Stomach (tissue), 19 donors: ENCODE measurements at regions of chr22 and their contacts with region 1.

Region 1: GRCh38 chr22:47575291-47575690 is 812.8 kb downstream of the TBC1D22A start:
- DNase-seq: peak; percentile 31 to 39
- H3K4me3 ChIP-seq: no peak overlapping the region
- H3K27ac ChIP-seq: no peak overlapping the region
- H3K4me1 ChIP-seq: no peaks in the 10 kb centered on the region
- H3K27me3 ChIP-seq: peaks cover 0 to 20% (median 0%) of the 10 kb centered on the region in 3 donors
- CTCF ChIP-seq: no peak
- EP300 ChIP-seq: no peak
- POLR2A ChIP-seq: no peak

Region 2: DNA sequence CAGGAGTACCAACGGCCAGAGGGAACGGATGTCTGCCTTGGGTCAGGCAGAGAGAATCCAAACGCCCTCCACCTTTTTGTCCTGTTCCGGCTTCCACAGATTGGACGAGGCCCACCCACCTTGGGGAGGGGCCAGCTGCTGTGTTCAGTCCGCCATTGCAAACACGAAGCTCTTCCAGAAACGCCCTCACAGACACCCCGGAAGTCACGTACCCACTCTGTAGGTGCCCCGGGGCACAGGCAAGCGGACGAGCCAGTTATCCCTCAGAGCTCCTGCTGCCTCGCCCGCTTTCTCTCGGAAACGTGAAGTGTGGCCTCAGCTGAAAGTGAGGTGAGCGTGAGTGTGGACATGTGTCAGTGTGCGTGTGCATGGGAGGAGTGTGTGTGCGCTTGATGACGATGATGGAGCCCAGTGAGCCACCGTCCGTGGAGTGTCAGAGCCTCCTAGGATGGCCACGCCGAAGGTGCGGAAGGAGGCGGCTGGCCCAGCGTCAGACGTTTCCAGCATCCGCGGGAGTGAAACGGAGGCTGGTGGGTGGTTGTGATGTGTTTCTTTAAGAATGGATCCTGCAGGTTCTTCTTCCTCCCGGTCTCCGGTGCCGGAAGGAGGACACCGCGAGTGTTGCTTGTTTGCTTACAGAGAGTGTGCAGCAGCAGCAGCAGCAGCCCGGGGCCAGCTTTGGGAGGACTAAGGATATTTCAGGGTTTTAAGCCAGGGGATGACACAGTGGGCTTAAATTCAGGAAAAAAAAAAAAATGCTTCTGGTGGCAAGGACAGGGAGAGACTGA is 56.5 kb after region 1 on chr22:
- intact Hi-C with region 1: no loop called
- DNase-seq: peak in 1 of 2 donors; percentile 23
- H3K4me3 ChIP-seq: no peak overlapping the region
- H3K27ac ChIP-seq: no peak overlapping the region
- H3K4me1 ChIP-seq: peaks cover 0 to 6% (median 0%) of the 10 kb centered on the region in 4 donors
- H3K27me3 ChIP-seq: peaks cover 0 to 37% (median 0%) of the 10 kb centered on the region in 3 donors
- CTCF ChIP-seq: no peak
- EP300 ChIP-seq: no peak
- POLR2A ChIP-seq: no peak

Region 3: GRCh38 chr22:47645450-47645914 is 70.2 kb after region 1 on chr22:
- intact Hi-C with region 1: no loop called
- DNase-seq: no peak
- H3K4me3 ChIP-seq: no peak overlapping the region
- H3K27ac ChIP-seq: no peak overlapping the region
- H3K4me1 ChIP-seq: no peaks in the 10 kb centered on the region
- H3K27me3 ChIP-seq: peaks cover 0 to 4% (median 0%) of the 10 kb centered on the region in 3 donors
- CTCF ChIP-seq: no peak
- EP300 ChIP-seq: no peak
- POLR2A ChIP-seq: no peak

Region 4: DNA sequence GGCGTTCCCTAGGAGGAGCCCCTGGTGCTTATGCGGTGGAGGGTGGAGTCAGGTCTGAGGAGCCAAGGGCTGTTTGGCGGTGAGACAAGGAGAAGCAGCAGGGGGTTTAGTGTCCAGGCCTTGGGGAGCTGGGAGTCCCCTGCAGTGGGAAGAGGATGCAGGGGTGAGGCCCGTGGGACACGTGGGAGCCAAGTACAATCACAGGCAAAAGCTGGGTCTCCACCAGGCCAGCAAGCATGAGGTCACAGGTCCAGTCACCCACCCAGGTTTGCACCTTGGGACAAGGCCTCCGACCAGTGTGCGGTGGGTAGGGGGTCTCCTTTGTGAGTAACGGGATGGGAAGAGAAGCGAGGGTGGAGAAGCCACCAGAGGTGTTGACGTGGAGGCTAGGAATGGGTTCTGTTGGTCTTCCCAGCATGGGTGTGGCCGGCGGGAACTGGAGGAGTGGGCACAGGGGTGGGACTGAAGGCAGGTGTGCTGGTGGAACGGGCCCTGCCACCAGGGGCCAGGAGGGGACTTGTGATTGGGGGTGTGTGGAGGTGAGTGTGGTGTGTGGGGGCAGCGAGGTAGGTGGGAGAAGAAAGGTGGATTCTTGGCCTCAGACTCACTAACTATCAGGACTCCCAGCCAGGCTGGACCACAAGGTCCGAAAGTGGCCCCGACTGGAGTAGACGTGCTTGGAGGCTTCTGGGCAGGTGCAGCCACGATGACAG is 140.7 kb after region 1 on chr22:
- intact Hi-C with region 1: no loop called
- DNase-seq: no peak
- H3K4me3 ChIP-seq: no peak overlapping the region
- H3K27ac ChIP-seq: no peak overlapping the region
- H3K4me1 ChIP-seq: no peaks in the 10 kb centered on the region
- H3K27me3 ChIP-seq: peaks cover 0 to 51% (median 6%) of the 10 kb centered on the region in 3 donors
- CTCF ChIP-seq: no peak
- EP300 ChIP-seq: no peak
- POLR2A ChIP-seq: no peak

Region 5: GRCh38 chr22:49266561-49267519 is 1691.5 kb after region 1 on chr22:
- intact Hi-C with region 1: loop called (anchors 10 kb)
- DNase-seq: no peak
- H3K4me3 ChIP-seq: no peak overlapping the region
- H3K27ac ChIP-seq: no peak overlapping the region
- H3K4me1 ChIP-seq: no peaks in the 10 kb centered on the region
- H3K27me3 ChIP-seq: peaks cover 0 to 66% (median 14%) of the 10 kb centered on the region in 3 donors
- CTCF ChIP-seq: no peak
- EP300 ChIP-seq: no peak
- POLR2A ChIP-seq: no peak